Naive thymus-derived CD4-positive, alpha-beta T cell (primary cell): ENCODE measurements at regions of chr2 and their contacts with region 1.

Region 1: GRCh38 chr2:231452799-231453508 is 11.3 kb downstream of the NCL start:
- DNase-seq: peak in 1 of 9 donors; percentile 20
- ATAC-seq: peak; percentile 16
- H3K4me3 ChIP-seq: no peak overlapping the region
- H3K4me3 Mint-ChIP-seq: peak overlapping the region in 2 of 10 donors; percentile 37 to 53
- H3K27ac ChIP-seq: no peak overlapping the region
- H3K27ac Mint-ChIP-seq: peak overlapping the region in 7 of 9 donors; percentile 31 to 84 (median 62)
- H3K4me1 ChIP-seq: no peaks in the 10 kb centered on the region
- H3K4me1 Mint-ChIP-seq: peaks cover 10 to 21% (median 12%) of the 10 kb centered on the region in 7 donors
- H3K27me3 ChIP-seq: no peaks in the 10 kb centered on the region
- H3K27me3 Mint-ChIP-seq: no peaks in the 10 kb centered on the region

Region 2: GRCh38 chr2:231104115-231104713 is 348.7 kb before region 1 on chr2:
- CTCF ChIA-PET with region 1: interaction called, 31 read pairs
- POLR2A ChIA-PET with region 1: interaction called, 3 read pairs
- intact Hi-C with region 1: loop called (anchors 1 kb)
- DNase-seq: peak in 8 of 9 donors; percentile 10 to 58 (median 40)
- ATAC-seq: peak; percentile 84
- H3K4me3 ChIP-seq: no peak overlapping the region
- H3K4me3 Mint-ChIP-seq: no peak overlapping the region
- H3K27ac ChIP-seq: no peak overlapping the region
- H3K27ac Mint-ChIP-seq: peak overlapping the region in 2 of 9 donors; percentile 10 to 12
- H3K4me1 ChIP-seq: no peaks in the 10 kb centered on the region
- H3K4me1 Mint-ChIP-seq: peaks cover 0 to 6% (median 5%) of the 10 kb centered on the region in 7 donors
- H3K27me3 ChIP-seq: no peaks in the 10 kb centered on the region
- H3K27me3 Mint-ChIP-seq: no peaks in the 10 kb centered on the region

Region 3: GRCh38 chr2:231297108-231297908 is 155.6 kb before region 1 on chr2:
- CTCF ChIA-PET with region 1: no interaction called
- POLR2A ChIA-PET with region 1: no interaction called
- intact Hi-C with region 1: loop called in 1 of 2 experiments (anchors 1 kb)
- DNase-seq: no peak
- ATAC-seq: peak; percentile 55
- H3K4me3 ChIP-seq: no peak overlapping the region
- H3K4me3 Mint-ChIP-seq: no peak overlapping the region
- H3K27ac ChIP-seq: no peak overlapping the region
- H3K27ac Mint-ChIP-seq: no peak overlapping the region
- H3K4me1 ChIP-seq: no peaks in the 10 kb centered on the region
- H3K4me1 Mint-ChIP-seq: peaks cover 0 to 8% (median 0%) of the 10 kb centered on the region in 7 donors
- H3K27me3 ChIP-seq: no peaks in the 10 kb centered on the region
- H3K27me3 Mint-ChIP-seq: peaks cover 0 to 11% (median 0%) of the 10 kb centered on the region in 5 donors

Region 4: GRCh38 chr2:231425811-231426728 is 26.9 kb before region 1 on chr2:
- CTCF ChIA-PET with region 1: no interaction called
- POLR2A ChIA-PET with region 1: no interaction called
- intact Hi-C with region 1: no loop called
- DNase-seq: peak in 3 of 9 donors; percentile 15 to 17 (median 16)
- ATAC-seq: peak; percentile 88
- H3K4me3 ChIP-seq: no peak overlapping the region
- H3K4me3 Mint-ChIP-seq: peak overlapping the region in 1 of 10 donors; percentile 48
- H3K27ac ChIP-seq: no peak overlapping the region
- H3K27ac Mint-ChIP-seq: peak overlapping the region in 1 of 9 donors; percentile 78
- H3K4me1 ChIP-seq: peaks cover 0 to 15% of the 10 kb centered on the region in 2 donors
- H3K4me1 Mint-ChIP-seq: peaks cover 0 to 6% (median 0%) of the 10 kb centered on the region in 7 donors
- H3K27me3 ChIP-seq: no peaks in the 10 kb centered on the region
- H3K27me3 Mint-ChIP-seq: peaks cover 0 to 2% (median 0%) of the 10 kb centered on the region in 5 donors